GM10248 (cell line): ENCODE measurements at regions of chr20 and their contacts with region 1.

Region 1: DNA sequence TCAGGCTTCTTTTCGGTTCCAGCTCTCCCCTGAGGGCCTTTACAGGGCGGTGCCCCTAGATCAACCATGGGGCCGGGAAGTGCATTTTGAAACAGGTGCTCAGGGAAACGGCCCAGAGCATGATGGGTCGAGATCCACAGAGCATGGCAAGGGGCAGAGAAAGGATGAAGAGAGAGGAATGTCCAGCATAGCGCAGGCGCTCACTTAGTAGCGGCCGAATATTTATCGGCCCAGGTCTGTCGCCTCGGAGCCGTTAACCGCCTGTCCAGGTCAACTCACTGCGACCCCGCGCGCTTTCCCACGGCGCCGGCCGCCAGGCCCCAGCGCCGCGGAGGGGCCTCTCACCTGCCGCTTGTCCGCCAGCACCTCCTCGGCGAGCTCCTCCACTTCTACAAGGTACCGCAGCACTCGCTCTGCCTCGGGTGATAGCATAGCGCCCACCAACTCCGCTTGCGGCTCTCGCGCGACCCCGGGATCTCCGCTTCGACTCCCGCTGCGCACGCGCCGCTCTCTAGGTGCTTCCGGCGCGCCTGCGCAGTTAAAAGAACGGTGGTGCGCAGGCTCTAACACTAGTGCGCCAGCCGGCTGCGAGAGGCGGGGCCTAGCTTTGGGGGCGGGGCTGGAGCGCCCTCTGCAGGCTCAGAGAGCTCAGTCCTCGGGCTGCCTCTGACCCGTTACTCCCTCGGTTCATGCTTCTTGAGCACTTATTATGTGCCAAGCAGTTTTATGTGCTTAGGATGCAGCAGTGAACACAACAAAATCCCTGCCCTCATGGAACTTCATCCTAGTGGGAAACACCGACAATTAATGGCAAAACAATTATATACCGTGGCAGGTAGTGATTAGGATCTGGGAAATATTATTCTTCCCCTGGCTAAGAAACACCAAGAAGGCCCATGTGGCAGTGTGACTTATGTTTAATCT is at the start of gene PDRG1:
- DNase-seq: peak; percentile 97
- CTCF ChIP-seq: peak; percentile 91

Region 2: DNA sequence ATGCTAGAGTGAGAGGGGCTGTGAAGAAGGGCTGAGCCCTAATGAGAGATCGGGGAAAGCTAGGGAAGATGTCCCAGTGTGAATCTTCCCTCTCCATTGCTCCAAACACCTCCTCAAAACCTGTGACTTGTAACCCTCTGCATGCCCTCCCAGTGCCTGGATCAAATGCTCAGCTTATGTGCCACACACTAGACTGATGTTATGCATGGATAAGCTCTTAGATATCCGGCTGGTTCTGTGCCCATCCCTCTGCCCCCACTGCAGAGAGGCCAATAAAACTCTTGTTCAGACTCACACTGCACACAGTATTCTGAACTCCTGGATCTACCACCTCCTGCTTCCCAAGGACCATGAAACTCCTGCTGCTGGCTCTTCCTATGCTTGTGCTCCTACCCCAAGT is 583.5 kb before region 1 on chr20 and contains the start of gene DEFB118:
- CTCF ChIA-PET with region 1: no interaction called
- POLR2A ChIA-PET with region 1: no interaction called
- DNase-seq: no peak
- CTCF ChIP-seq: no peak

Region 3: GRCh38 chr20:31822421-31823330 is 129.1 kb before region 1 on chr20:
- CTCF ChIA-PET with region 1: interaction called, 31 read pairs
- POLR2A ChIA-PET with region 1: no interaction called
- DNase-seq: peak; percentile 92
- CTCF ChIP-seq: peak; percentile 96

Region 4: DNA sequence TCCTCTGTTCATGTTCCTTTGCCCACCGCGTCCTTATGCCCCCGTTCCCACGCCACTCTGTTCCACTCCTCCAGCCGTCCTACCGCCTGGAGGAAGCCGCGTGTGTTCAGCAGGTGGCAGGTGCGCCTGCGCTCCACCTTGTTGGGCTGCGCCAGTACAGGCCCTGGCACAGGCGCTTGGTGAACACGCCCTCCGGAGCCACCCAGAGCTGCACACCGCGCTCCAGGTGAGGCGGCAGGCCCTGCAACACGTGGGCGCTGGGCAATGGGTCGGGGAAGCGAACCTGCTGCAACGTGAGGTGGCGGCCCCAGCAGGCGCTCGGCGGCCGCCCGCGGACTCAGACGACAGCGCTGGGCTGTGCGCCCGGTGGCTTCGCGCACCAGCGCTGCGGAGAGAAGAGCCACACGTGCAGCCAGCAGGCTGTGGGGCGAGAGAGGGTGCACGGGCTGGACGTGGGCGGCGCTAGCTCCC is 102.3 kb before region 1 on chr20:
- CTCF ChIA-PET with region 1: interaction called, 200 read pairs
- POLR2A ChIA-PET with region 1: no interaction called
- DNase-seq: no peak
- CTCF ChIP-seq: no peak

Region 5: GRCh38 chr20:31861346-31862156 is 90.2 kb before region 1 on chr20:
- CTCF ChIA-PET with region 1: interaction called, 200 read pairs
- POLR2A ChIA-PET with region 1: interaction called, 8 read pairs
- DNase-seq: peak; percentile 92
- CTCF ChIP-seq: no peak

Region 6: GRCh38 chr20:31879143-31879987 is 72.4 kb before region 1 on chr20:
- CTCF ChIA-PET with region 1: interaction called, 16 read pairs
- POLR2A ChIA-PET with region 1: no interaction called
- DNase-seq: peak; percentile 90
- CTCF ChIP-seq: no peak

Region 7: DNA sequence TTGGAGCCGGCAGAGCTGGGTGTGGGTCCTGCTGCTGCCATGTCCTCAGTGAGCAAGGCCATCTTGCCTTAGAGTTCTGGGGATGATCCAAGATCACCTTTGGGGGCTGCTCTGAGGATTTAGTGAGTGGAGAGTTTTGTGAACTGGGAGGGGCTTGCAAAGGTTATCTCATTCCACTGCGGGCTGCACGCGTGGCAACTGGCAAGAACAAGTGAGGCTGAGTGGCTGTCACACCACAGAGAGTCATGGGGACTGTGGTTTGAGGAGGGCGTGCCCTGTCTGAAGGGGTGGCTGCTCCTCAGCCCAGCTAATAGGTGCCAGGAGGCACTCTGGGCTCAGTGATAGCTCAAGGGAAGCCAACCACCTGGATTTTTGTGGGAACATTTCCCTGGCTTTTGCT is 43.8 kb before region 1 on chr20:
- CTCF ChIA-PET with region 1: interaction called, 17 read pairs
- POLR2A ChIA-PET with region 1: no interaction called
- DNase-seq: no peak
- CTCF ChIP-seq: no peak

Region 8: GRCh38 chr20:31962761-31963160 is 11.0 kb after region 1 on chr20:
- CTCF ChIA-PET with region 1: interaction called, 20 read pairs
- POLR2A ChIA-PET with region 1: no interaction called
- DNase-seq: no peak
- CTCF ChIP-seq: no peak